ENCODE measurements at regions of chr19 and their contacts with region 1.

Region 1: DNA sequence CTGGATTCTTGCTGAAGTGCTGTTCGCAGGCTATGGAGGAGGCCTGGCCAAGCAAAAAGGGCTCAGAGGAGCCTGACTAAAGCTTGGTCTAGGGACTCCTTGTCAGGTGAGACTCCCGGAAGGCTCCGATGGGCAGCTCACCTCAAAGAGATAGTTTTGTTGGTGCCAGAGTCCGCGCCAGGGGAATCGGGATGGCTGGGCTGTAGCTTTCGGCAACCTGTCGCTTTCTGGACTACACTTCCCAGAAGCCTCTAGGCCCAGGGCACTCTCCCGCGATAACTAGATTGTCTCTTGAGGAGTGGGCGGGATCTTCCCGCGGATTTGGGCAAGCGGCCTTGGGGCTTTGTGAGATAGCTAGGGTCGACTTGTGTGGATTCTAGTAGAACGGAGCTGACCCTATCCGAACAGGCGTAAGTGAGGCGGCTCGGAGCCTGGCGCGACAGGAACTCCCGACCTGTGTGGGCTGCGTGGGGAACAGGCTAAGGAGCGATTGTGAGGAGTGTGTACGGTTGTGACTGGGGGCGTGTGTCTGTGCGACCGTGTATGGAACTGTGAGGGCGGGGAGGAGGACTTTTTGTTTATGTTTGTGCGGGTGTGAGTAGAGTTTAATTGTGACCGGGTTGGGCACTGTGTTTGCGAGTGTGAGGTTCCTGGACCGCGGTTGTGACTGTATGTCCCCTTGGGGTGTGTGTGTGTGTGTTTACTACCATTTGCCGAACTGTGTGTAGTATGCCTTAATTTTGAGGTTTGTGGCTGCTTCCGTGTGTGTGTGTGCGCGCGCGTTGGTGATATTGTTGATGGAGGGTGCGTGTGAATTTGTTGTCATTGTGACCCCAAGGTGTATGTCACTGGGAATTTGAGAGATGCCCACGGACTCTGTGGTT is at the start of gene ZNF345:
- DNase-seq: peak; percentile 93
- ATAC-seq: peak; percentile 97
- H3K4me3 ChIP-seq: peak within 1 kb of the TSS; percentile 58 to 93
- H3K27ac ChIP-seq: peak within 1 kb of the TSS; percentile 90
- H3K4me1 ChIP-seq: no peaks in the 10 kb centered on the region
- H3K27me3 ChIP-seq: no peaks in the 10 kb centered on the region
- CTCF ChIP-seq: no peak
- total RNA-seq, gene ZNF345: 3.8 TPM

Region 2: DNA sequence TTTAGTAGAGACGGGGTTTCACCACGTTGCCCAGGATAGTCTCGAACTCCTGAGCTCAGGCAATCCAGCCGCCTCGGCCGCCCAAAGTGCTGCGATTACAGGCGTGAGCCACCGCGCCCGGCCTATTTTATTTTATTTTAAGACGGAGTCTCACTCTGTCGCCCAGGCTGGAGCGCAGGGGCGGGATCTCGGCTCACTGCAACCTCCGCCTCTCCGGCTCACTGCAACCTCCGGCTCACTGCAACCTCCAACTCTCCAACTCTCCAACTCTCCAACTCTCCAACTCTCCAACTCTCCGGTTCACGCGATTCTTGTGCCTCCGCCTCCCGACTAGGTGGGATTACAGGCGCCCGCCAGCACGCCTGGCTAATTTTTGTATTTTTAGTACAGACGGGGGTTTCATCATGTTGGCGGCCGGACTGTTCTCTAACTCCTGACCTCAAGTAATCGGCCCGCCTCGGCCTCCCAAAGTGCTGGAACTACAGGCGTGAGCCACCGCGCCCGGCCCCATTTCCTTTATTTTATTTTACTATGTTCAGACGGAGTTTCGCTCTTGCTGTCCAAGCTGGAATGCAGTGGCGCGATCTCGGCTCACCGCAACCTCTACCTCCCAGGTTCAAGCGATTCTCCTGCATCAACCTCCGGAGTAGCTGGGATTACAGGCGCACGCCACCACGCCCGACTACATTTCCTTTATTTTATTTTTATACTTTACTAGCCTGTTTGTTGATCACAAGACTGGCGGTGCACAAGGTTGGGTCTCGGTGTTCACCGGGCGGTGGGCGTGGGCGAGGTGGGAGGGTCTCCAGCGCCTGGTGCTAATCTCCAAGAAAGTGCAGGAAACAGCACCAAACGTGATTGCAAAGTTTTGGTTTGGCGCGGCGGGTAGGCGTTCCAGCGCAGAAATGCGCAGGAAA is 54.5 kb before region 1 on chr19:
- CTCF ChIA-PET with region 1: no interaction called
- POLR2A ChIA-PET with region 1: interaction called, 12 read pairs
- in situ Hi-C with region 1: no loop called
- intact Hi-C with region 1: no loop called
- DNase-seq: no peak
- ATAC-seq: no peak
- H3K4me3 ChIP-seq: peak overlapping the region; percentile 77 to 85
- H3K27ac ChIP-seq: peak overlapping the region; percentile 91
- H3K4me1 ChIP-seq: 0 out of 2 replicates have a peak, but pooled peaks cover 5% of the 10 kb centered on the region
- H3K27me3 ChIP-seq: no peaks in the 10 kb centered on the region
- CTCF ChIP-seq: no peak

Region 3: DNA sequence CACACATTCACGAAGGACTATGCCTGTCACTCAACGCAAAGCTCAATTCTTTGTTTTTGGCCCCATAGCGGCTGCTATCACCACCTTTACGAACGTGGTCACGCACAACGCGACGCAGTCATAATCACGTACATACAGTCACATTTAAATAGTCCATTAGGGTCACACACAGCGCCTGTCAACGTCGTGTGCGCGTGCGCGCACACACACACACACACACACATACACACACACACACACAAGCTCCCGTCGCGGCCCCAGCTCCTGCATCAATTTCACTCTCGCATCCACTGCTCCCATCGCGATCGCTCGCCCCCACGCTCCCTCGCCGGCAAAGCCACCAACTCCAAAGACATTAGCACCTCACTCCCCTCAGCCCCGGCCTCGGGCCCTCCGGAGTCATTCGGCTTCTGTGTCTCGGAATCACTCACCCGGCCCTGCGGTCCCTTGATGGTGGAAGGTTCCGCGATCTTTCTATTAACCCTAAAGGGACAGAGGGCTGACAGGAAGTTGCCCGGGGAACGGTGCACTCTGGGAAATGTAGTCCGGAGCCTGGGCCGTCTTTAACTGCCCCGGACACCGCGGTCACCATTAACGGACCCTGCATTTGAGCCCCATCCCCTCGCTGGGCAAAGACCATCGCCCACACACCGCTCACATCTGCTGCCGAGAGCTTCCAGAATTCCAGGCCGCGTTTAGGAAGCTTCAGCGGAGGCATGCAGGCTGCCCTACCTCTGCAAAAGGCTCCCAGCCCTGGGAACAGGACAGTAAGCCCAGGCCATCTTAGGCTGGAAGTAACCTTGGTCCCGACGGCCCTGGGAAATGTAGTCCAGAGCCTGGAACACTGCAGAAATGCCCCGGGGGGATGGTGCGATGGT is 12.7 kb before region 1 on chr19 and contains the start of gene ZNF790:
- CTCF ChIA-PET with region 1: no interaction called
- POLR2A ChIA-PET with region 1: no interaction called
- in situ Hi-C with region 1: no loop called
- intact Hi-C with region 1: no loop called
- DNase-seq: peak; percentile 89
- ATAC-seq: peak; percentile 98
- H3K4me3 ChIP-seq: peak within 1 kb of the TSS; percentile 75 to 93
- H3K27ac ChIP-seq: peak within 1 kb of the TSS; percentile 94
- H3K4me1 ChIP-seq: peaks cover 3% of the 10 kb centered on the region; the same call in 1 of the 2 replicates
- H3K27me3 ChIP-seq: no peaks in the 10 kb centered on the region
- CTCF ChIP-seq: no peak
- total RNA-seq, gene ZNF790: 5.8 TPM

Region 4: GRCh38 chr19:36915992-36916830 is 65.4 kb after region 1 on chr19 and contains the starts of genes ZNF568 and ZNF829:
- CTCF ChIA-PET with region 1: no interaction called
- POLR2A ChIA-PET with region 1: no interaction called
- in situ Hi-C with region 1: no loop called
- intact Hi-C with region 1: loop called (anchors 5 kb)
- DNase-seq: peak; percentile 81
- ATAC-seq: peak; percentile 99
- H3K4me3 ChIP-seq: peak within 1 kb of the TSS; percentile 64 to 86
- H3K27ac ChIP-seq: peak within 1 kb of the TSS; percentile 85
- H3K4me1 ChIP-seq: peaks cover 6% of the 10 kb centered on the region; the same call in 1 of the 2 replicates
- H3K27me3 ChIP-seq: no peaks in the 10 kb centered on the region
- CTCF ChIP-seq: peak; percentile 85
- total RNA-seq, gene ZNF568: 19.3 TPM
- total RNA-seq, gene ZNF829: 7.2 TPM

Region 5: GRCh38 chr19:37899966-37900365 is 1049.2 kb after region 1 on chr19:
- CTCF ChIA-PET with region 1: interaction called, 14 read pairs
- POLR2A ChIA-PET with region 1: no interaction called
- in situ Hi-C with region 1: no loop called
- intact Hi-C with region 1: no loop called
- DNase-seq: no peak
- ATAC-seq: no peak
- H3K4me3 ChIP-seq: no peak overlapping the region
- H3K27ac ChIP-seq: no peak overlapping the region
- H3K4me1 ChIP-seq: no peaks in the 10 kb centered on the region
- H3K27me3 ChIP-seq: no peaks in the 10 kb centered on the region
- CTCF ChIP-seq: no peak